Activated CD4-positive, alpha-beta T cell treated with anti-CD3 and anti-CD28 coated beads, Interleukin-2, amount 10 ng/mL, durations not matched to agents 24 days and 14 days (primary cell): ENCODE measurements at regions of chr7 and their contacts with region 1.

Region 1: DNA sequence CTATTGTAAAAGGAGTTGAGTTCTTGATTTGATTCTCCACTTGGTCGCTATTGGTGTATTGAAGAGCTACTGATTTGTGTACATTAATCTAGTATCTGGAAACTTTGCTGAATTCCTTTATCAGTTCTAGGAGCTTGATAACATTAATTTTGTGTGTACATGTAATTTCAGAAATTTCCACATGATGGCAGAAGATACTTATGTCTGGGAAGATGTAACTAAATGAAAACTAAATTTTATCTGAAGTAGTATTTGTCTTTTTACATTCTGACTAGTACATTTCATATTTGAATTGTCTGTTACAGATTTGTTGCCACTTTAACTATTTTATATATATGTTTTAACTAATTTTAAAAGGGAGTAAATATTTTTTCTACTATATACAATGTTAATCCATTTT is 27.6 kb downstream of the SDHAF3 start:
- DNase-seq: no peak
- H3K4me3 Mint-ChIP-seq: no peak overlapping the region
- H3K27ac Mint-ChIP-seq: no peak overlapping the region
- H3K4me1 Mint-ChIP-seq: no peaks in the 10 kb centered on the region
- H3K27me3 Mint-ChIP-seq: no peaks in the 10 kb centered on the region

Region 2: DNA sequence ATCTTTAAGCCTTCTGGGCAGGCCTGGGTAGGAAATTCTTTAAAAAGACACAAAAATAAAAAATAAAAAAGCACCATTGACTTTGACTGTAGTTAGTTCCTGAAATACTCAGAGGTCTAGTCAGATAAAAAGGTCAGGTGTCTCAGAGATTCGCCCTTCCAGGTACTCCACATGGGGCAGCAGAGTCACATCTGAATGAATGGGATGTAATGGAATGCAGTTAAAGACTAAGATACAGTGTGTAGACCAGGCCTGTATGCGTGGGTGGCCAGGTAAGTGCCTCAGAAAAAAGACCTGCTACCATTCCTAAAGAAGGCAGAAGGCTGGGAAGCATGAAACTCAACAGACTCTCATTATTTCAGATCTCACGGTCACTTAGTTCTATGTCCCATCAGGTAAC is 366.8 kb before region 1 on chr7:
- intact Hi-C with region 1: no loop called
- DNase-seq: no peak
- H3K4me3 Mint-ChIP-seq: no peak overlapping the region
- H3K27ac Mint-ChIP-seq: no peak overlapping the region
- H3K4me1 Mint-ChIP-seq: no peaks in the 10 kb centered on the region
- H3K27me3 Mint-ChIP-seq: no peaks in the 10 kb centered on the region

Region 3: DNA sequence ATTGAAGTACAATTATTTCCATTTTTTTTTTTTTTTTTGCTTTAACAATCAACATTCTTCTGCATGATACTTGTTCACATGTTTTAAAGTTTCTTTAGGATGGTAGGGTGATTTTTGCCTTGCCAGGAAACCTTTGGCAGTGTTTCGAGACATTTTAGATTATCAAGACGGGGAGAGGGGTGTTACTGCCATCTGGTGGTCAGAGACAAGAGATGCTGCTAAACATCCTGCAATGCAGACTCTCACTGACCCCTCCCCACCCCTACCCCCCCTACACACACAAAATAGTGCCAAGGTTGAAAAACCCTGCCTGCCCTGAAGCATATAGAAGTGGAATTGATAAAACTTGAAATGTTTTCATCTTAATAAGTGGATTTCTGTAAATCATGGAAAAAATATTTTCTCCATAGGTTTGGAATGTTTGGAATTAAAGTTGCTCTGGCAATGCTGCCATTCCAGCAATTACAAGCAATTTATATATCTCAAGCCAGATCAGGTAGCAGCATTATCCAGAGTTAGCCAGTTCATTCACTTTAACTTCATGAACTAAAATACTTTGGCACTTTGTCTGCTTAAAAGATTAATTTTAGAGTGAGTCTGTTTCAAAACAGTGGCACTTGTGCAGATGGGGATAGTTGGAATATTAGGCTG is 34.5 kb after region 1 on chr7:
- intact Hi-C with region 1: loop called (anchors 1 kb)
- DNase-seq: peak; percentile 81
- H3K4me3 Mint-ChIP-seq: no peak overlapping the region
- H3K27ac Mint-ChIP-seq: no peak overlapping the region
- H3K4me1 Mint-ChIP-seq: no peaks in the 10 kb centered on the region
- H3K27me3 Mint-ChIP-seq: no peaks in the 10 kb centered on the region

Region 4: DNA sequence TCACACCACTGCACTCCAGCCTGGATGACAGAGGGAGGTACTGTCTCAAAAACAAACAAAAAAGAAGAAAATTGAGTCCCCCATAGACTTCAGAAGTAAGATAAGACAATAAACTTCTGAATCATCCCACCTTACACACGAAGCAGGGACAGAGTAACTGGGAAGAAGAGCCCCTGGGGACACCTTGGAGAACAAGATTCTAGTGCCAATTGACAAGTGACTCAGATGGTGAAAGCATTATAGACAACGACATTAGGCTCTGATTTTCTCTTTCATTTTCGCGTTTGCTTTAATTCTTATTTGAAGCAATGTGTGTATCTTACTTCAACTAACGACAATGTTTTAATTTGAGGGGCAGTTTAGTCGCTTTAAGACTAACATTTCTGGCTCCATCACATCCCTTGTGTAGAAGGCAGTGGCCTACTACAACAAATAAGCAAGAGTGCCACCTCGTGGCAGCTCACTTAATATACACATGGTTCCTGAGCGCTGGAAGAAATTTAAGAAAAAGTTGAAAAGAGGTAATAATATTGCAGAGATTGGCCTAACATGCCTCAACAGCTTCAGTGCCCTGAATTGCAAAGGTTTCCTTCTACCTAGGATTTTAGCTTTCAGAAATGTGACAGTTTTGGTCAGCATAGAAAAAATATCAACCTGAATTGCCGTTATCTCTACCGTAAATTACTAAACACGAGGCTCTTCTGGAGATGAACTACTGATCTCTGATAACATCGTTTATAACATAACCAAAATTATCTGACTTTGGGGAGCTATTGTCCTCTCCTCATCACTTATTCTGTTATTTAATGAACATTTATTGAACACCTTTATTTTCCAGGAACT is 690.4 kb after region 1 on chr7:
- intact Hi-C with region 1: loop called (anchors 1 kb)
- DNase-seq: peak; percentile 86
- H3K4me3 Mint-ChIP-seq: no peak overlapping the region
- H3K27ac Mint-ChIP-seq: no peak overlapping the region
- H3K4me1 Mint-ChIP-seq: no peaks in the 10 kb centered on the region
- H3K27me3 Mint-ChIP-seq: peaks cover 39% of the 10 kb centered on the region